Panc1 (cell line): ENCODE measurements at regions of chr10 and their contacts with region 1.

Region 1: GRCh38 chr10:79195091-79195923 is 126.5 kb downstream of the ZMIZ1 start:
- DNase-seq: peak; percentile 30
- ATAC-seq: peak; percentile 86
- H3K4me3 ChIP-seq: no peak overlapping the region
- H3K27ac ChIP-seq: no peak overlapping the region
- H3K4me1 ChIP-seq: peaks cover 24% of the 10 kb centered on the region
- H3K27me3 ChIP-seq: no peaks in the 10 kb centered on the region
- CTCF ChIP-seq: peak; percentile 98

Region 2: GRCh38 chr10:78437998-78438906 is 757.1 kb before region 1 on chr10:
- CTCF ChIA-PET with region 1: no interaction called
- POLR2A ChIA-PET with region 1: no interaction called
- in situ Hi-C with region 1: no loop called
- intact Hi-C with region 1: loop called (anchors 10 kb)
- DNase-seq: no peak
- ATAC-seq: 0 out of 2 replicates have a peak, but pooled peaks have one; percentile 29
- H3K4me3 ChIP-seq: no peak overlapping the region
- H3K27ac ChIP-seq: no peak overlapping the region
- H3K4me1 ChIP-seq: peaks cover 13% of the 10 kb centered on the region; the same call in 1 of the 2 replicates
- H3K27me3 ChIP-seq: no peaks in the 10 kb centered on the region
- CTCF ChIP-seq: no peak; the same call in 1 of the 2 replicates

Region 3: GRCh38 chr10:78953113-78953798 is 242.1 kb before region 1 on chr10:
- CTCF ChIA-PET with region 1: no interaction called
- POLR2A ChIA-PET with region 1: no interaction called
- in situ Hi-C with region 1: no loop called
- intact Hi-C with region 1: no loop called
- DNase-seq: no peak
- ATAC-seq: no peak
- H3K4me3 ChIP-seq: no peak overlapping the region
- H3K27ac ChIP-seq: no peak overlapping the region
- H3K4me1 ChIP-seq: no peaks in the 10 kb centered on the region
- H3K27me3 ChIP-seq: no peaks in the 10 kb centered on the region
- CTCF ChIP-seq: no peak

Region 4: DNA sequence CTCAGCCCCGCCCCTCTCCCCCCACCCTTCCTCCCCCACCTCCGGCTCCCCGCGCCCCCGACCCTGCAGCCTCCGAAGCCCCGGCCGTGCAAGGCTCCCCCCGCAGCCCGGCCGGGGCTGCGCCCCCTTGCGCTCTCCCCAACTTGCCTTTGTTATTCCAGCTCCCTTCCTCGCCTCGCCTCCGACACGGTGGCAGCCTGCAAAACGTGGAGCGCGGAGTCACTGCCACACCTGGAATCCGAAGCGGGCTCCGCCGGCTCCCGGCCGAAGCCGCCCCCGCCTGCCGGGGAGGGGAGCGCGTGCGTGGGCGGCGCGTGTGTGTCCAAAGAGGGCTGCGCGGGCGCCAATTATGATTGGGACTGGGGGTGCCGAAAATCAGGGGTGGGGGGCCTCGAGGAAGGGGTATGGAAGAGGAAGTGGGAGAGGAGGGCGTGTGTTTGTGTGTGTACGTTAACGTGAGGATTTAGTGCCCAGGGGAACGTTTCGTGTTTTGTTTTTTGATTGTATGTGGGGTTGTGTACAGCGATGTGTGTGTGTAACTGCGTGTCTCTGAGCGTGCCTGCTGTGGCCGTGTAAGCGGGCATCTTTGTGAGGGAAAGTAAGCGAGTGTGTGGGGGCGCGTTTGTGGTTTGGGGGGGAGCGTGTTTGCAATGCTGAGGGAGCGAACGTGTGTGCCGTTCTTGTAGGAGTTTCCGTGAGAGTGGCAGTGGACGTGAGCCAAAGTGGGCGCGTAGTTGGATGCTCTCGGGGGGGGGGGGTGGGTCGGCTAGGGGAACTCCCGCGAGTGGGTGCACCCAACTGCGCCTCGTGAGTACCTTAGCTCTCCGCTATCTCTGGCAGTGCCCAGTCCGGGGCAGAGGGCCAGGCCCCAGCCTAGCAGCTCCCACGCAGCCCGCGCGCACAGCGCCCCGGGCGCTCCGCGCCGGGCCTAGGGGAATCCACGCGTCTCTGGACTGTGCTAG is 127.8 kb before region 1 on chr10:
- CTCF ChIA-PET with region 1: interaction called, 4 read pairs
- POLR2A ChIA-PET with region 1: no interaction called
- in situ Hi-C with region 1: no loop called
- intact Hi-C with region 1: loop called (anchors 2 kb)
- DNase-seq: no peak
- ATAC-seq: no peak
- H3K4me3 ChIP-seq: peak overlapping the region; percentile 88 to 93
- H3K27ac ChIP-seq: peak overlapping the region; percentile 60
- H3K4me1 ChIP-seq: peaks cover 26% of the 10 kb centered on the region
- H3K27me3 ChIP-seq: no peaks in the 10 kb centered on the region
- CTCF ChIP-seq: no peak; the same call in 1 of the 2 replicates